Activated B cell treated with CpG ODN at 0.5 μM for 24 hours (primary cell): ENCODE measurements at regions of chr5 and their contacts with region 1.

Region 1: GRCh38 chr5:124056991-124057723 is 545.2 kb downstream of the CSNK1G3 start:
- DNase-seq: peak; percentile 59
- ATAC-seq: peak; percentile 85
- H3K4me3 Mint-ChIP-seq: peak overlapping the region; percentile 82
- H3K27ac Mint-ChIP-seq: peak overlapping the region; percentile 90
- H3K4me1 Mint-ChIP-seq: peaks cover 57% of the 10 kb centered on the region
- H3K27me3 Mint-ChIP-seq: no peaks in the 10 kb centered on the region
- CTCF ChIP-seq: no peak

Region 2: GRCh38 chr5:123423278-123424149 is 633.6 kb before region 1 on chr5 and contains the start of gene CEP120:
- CTCF ChIA-PET with region 1: no interaction called
- POLR2A ChIA-PET with region 1: no interaction called
- intact Hi-C with region 1: loop called (anchors 5 kb)
- DNase-seq: peak; percentile 89
- ATAC-seq: peak; percentile 95
- H3K4me3 Mint-ChIP-seq: no peak within 1 kb of the TSS
- H3K27ac Mint-ChIP-seq: no peak within 1 kb of the TSS
- H3K4me1 Mint-ChIP-seq: peaks cover 11% of the 10 kb centered on the region
- H3K27me3 Mint-ChIP-seq: no peaks in the 10 kb centered on the region
- CTCF ChIP-seq: no peak
- total RNA-seq, gene CEP120: 39.2 and 43.1 TPM in 2 replicates

Region 3: DNA sequence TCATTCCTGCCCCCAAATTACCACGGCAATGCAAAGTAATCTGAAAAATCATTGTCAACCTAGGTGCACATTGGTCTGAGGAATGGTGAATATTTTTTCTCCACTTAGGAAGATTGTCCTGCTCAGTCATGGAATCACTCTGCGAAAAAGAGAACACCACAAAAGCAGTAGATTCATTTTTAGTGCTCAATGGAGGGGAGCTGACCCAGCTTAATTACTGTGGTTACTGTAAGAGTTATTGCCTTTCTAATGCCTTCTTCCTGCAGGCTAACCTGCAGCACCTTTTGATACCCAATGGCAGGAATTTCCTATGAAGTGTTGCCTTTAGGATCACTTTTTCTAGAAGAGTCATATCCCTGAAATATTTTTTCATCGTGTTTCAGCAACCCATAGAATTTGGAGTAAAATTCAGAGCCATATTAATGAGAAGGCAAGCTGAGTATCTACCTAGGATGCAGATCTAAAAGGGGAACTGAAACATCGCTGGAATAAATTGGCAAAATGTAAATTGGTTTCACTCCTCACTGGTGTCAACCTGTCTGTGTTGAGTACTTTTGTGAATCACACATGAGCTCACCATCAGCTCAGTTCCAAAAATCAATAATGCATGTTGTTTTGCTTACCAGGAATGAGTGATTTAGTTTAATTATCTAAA is 80.7 kb before region 1 on chr5:
- CTCF ChIA-PET with region 1: no interaction called
- POLR2A ChIA-PET with region 1: interaction called, 3 read pairs
- intact Hi-C with region 1: loop called (anchors 1 kb)
- DNase-seq: no peak
- ATAC-seq: peak; percentile 90
- H3K4me3 Mint-ChIP-seq: no peak overlapping the region
- H3K27ac Mint-ChIP-seq: no peak overlapping the region
- H3K4me1 Mint-ChIP-seq: peaks cover 30% of the 10 kb centered on the region
- H3K27me3 Mint-ChIP-seq: no peaks in the 10 kb centered on the region
- CTCF ChIP-seq: no peak

Region 4: DNA sequence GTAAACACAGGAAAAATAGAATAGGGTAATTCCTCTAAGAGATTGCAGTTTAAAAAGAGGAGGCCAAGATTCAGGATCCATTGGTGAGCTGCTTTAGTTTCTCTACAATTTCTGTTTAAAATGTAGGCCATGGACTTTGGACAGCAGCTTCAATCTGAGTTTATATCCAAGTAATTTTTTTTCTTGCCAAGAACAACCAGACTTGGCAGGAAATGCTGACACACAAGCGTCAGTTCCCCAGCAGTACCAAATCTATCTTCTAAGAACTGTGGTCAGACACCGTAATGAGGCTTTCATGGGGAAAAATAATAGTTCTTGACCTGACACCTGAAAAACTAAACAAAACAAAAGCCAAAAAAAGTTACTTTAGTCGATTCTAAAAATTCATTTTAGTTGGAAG is 16.4 kb before region 1 on chr5:
- CTCF ChIA-PET with region 1: interaction called, 4 read pairs
- POLR2A ChIA-PET with region 1: interaction called, 3 read pairs
- intact Hi-C with region 1: loop called (anchors 1 kb)
- DNase-seq: no peak
- ATAC-seq: no peak
- H3K4me3 Mint-ChIP-seq: no peak overlapping the region
- H3K27ac Mint-ChIP-seq: no peak overlapping the region
- H3K4me1 Mint-ChIP-seq: peaks cover 21% of the 10 kb centered on the region
- H3K27me3 Mint-ChIP-seq: no peaks in the 10 kb centered on the region
- CTCF ChIP-seq: no peak

Region 5: GRCh38 chr5:124088289-124089032 is 31.3 kb after region 1 on chr5:
- CTCF ChIA-PET with region 1: no interaction called
- POLR2A ChIA-PET with region 1: no interaction called
- intact Hi-C with region 1: no loop called
- DNase-seq: no peak
- ATAC-seq: no peak
- H3K4me3 Mint-ChIP-seq: no peak overlapping the region
- H3K27ac Mint-ChIP-seq: no peak overlapping the region
- H3K4me1 Mint-ChIP-seq: no peaks in the 10 kb centered on the region
- H3K27me3 Mint-ChIP-seq: no peaks in the 10 kb centered on the region
- CTCF ChIP-seq: no peak

Region 6: GRCh38 chr5:124162779-124163532 is 105.8 kb after region 1 on chr5:
- CTCF ChIA-PET with region 1: no interaction called
- POLR2A ChIA-PET with region 1: interaction called, 5 read pairs
- intact Hi-C with region 1: loop called (anchors 5 kb)
- DNase-seq: no peak
- ATAC-seq: peak; percentile 60
- H3K4me3 Mint-ChIP-seq: peak overlapping the region; percentile 64
- H3K27ac Mint-ChIP-seq: peak overlapping the region; percentile 46
- H3K4me1 Mint-ChIP-seq: peaks cover 50% of the 10 kb centered on the region
- H3K27me3 Mint-ChIP-seq: no peaks in the 10 kb centered on the region
- CTCF ChIP-seq: no peak

Region 7: GRCh38 chr5:124544366-124545055 is 487.4 kb after region 1 on chr5:
- CTCF ChIA-PET with region 1: no interaction called
- POLR2A ChIA-PET with region 1: no interaction called
- intact Hi-C with region 1: no loop called
- DNase-seq: no peak
- ATAC-seq: peak; percentile 90
- H3K4me3 Mint-ChIP-seq: no peak overlapping the region
- H3K27ac Mint-ChIP-seq: no peak overlapping the region
- H3K4me1 Mint-ChIP-seq: peaks cover 10% of the 10 kb centered on the region
- H3K27me3 Mint-ChIP-seq: no peaks in the 10 kb centered on the region
- CTCF ChIP-seq: no peak

Region 8: DNA sequence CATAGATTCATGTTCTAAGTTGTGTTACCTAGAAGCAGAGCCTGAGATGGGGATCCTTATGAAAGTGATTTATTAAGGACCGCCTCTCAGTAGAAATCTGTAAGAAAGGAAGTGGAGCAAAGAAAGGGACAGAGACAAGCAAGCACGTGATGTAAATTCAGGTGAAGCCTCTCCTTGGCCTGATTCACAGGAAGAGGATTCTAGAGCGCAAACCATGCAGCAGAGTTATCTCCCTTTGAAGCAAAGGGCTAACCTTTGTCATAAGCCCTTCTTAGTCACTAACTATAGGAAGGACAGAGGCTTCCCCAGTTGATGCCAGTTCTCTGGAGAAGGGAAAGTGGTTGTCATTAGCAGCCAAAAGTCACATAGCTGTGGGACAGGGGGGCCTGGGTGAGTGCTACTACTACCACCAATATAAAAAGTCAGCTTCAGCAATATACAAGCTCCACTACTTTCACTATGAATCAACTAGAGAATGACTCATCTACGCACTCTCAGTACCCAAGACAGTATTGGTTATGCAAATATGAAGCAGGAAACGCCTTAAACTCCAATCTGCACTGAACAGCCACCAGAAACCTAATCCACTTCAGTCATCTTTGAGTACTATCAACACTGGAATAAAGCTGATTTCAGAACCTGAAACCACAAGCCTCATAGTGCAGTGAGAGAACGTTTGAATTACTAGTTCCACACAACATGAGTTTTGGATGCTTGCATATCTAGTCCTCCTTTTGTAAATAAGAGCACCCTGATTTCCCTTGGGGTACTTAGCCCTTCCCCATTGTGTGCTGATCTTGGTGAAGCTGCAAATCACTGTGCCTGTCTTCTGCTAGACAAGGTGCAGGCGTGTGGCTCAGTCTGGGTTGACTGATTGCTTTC is 526.6 kb after region 1 on chr5:
- CTCF ChIA-PET with region 1: no interaction called
- POLR2A ChIA-PET with region 1: interaction called, 7 read pairs
- intact Hi-C with region 1: loop called (anchors 1 kb)
- DNase-seq: peak; percentile 23
- ATAC-seq: peak; percentile 89
- H3K4me3 Mint-ChIP-seq: peak overlapping the region; percentile 61
- H3K27ac Mint-ChIP-seq: peak overlapping the region; percentile 94
- H3K4me1 Mint-ChIP-seq: peaks cover 36% of the 10 kb centered on the region
- H3K27me3 Mint-ChIP-seq: no peaks in the 10 kb centered on the region
- CTCF ChIP-seq: no peak

Region 9: DNA sequence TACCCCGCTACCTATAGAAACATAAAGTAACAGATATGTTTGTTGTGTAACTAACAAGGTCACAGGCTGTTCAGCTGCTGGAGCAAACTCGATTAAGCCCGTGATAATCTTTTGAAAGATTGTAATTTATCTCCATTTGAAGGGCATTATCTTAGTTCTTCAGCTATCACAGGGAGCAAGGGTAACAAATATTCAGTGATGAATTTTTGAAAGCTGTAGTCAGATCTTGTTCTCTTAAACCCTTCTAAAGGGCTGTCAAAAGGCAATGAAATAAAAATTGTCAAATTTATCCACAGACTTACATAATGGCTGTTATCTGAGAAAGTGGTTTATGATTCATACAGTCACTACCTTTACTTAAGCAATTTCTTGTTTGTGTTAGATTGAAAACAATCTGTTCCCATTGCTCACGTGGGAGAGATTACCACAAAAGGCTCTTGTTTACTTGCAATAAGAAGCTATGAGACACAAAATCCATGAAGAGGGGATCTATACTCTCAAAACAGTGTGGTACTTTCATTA is 767.5 kb after region 1 on chr5:
- CTCF ChIA-PET with region 1: no interaction called
- POLR2A ChIA-PET with region 1: no interaction called
- intact Hi-C with region 1: loop called (anchors 2 kb)
- DNase-seq: no peak
- ATAC-seq: no peak
- H3K4me3 Mint-ChIP-seq: no peak overlapping the region
- H3K27ac Mint-ChIP-seq: peak overlapping the region; percentile 74
- H3K4me1 Mint-ChIP-seq: peaks cover 17% of the 10 kb centered on the region
- H3K27me3 Mint-ChIP-seq: no peaks in the 10 kb centered on the region
- CTCF ChIP-seq: no peak